Caco-2 (cell line): ENCODE measurements at regions of chrX and their contacts with region 1.

Region 1: DNA sequence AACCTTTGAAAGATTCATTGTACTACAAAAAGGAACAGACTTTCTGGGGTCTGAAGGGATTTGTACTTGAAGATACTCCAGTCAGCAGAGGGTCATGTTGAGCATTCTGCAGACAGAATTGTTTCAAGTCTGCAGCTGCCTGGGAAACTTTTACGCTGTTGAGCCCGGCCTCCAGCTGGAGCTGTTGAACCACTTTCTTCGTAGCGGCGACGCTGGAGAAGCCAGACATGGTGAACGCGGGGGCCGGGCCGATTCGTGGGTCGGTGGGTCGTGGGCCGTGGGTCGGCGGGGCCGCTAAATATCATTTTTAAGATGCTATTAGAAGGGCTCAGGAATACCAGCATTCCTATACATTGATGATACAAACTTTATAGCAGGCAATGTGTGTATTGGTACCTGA is 12.0 kb upstream of the RTL9 start:
- DNase-seq: peak; percentile 17 to 32
- H3K4me3 ChIP-seq: no peak overlapping the region
- H3K4me3 Mint-ChIP-seq: peak overlapping the region; percentile 29
- H3K27ac Mint-ChIP-seq: no peak overlapping the region
- H3K4me1 ChIP-seq: no peaks in the 10 kb centered on the region
- H3K4me1 Mint-ChIP-seq: no peaks in the 10 kb centered on the region
- H3K27me3 ChIP-seq: no peaks in the 10 kb centered on the region
- H3K27me3 Mint-ChIP-seq: no peaks in the 10 kb centered on the region
- CTCF ChIP-seq: no peak

Region 2: GRCh38 chrX:110070970-110071369 is 275.7 kb before region 1 on chrX:
- CTCF ChIA-PET with region 1: no interaction called
- POLR2A ChIA-PET with region 1: no interaction called
- intact Hi-C with region 1: no loop called
- DNase-seq: no peak
- H3K4me3 ChIP-seq: no peak overlapping the region
- H3K4me3 Mint-ChIP-seq: no peak overlapping the region
- H3K27ac Mint-ChIP-seq: no peak overlapping the region
- H3K4me1 ChIP-seq: no peaks in the 10 kb centered on the region
- H3K4me1 Mint-ChIP-seq: no peaks in the 10 kb centered on the region
- H3K27me3 ChIP-seq: no peaks in the 10 kb centered on the region
- H3K27me3 Mint-ChIP-seq: no peaks in the 10 kb centered on the region
- CTCF ChIP-seq: no peak

Region 3: DNA sequence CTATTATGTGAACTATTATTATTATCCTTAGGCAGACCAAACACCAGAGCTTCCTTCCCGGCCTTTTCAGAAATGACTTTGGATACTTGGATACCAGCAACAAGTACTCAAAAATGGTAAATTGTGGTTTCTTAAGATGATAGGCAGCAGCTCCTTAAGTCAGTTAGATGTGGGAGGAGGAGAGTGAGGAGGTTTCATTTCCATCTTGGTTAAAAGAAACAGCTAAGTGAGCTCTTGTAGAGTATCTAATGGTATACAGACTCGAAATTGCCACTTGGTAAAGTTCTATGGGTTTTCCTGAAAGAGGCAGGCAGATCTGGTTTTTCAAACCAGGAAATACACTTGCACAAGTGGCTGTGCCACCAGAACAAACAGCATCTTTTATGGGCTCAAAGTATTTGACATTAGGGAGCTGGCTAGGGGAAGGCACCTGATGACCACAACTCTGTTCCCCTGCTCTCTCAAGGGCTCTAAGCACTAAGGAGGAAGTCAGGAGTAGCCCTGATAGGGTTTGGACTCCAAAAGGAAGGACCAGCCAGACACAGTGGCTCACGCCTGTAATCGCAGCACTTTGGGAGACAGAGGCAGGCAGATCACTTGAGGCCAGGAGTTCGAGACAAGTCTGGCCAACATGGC is 212.8 kb before region 1 on chrX:
- CTCF ChIA-PET with region 1: no interaction called
- POLR2A ChIA-PET with region 1: no interaction called
- intact Hi-C with region 1: no loop called
- DNase-seq: no peak
- H3K4me3 ChIP-seq: no peak overlapping the region
- H3K4me3 Mint-ChIP-seq: no peak overlapping the region
- H3K27ac Mint-ChIP-seq: no peak overlapping the region
- H3K4me1 ChIP-seq: no peaks in the 10 kb centered on the region
- H3K4me1 Mint-ChIP-seq: no peaks in the 10 kb centered on the region
- H3K27me3 ChIP-seq: no peaks in the 10 kb centered on the region
- H3K27me3 Mint-ChIP-seq: no peaks in the 10 kb centered on the region
- CTCF ChIP-seq: no peak

Region 4: DNA sequence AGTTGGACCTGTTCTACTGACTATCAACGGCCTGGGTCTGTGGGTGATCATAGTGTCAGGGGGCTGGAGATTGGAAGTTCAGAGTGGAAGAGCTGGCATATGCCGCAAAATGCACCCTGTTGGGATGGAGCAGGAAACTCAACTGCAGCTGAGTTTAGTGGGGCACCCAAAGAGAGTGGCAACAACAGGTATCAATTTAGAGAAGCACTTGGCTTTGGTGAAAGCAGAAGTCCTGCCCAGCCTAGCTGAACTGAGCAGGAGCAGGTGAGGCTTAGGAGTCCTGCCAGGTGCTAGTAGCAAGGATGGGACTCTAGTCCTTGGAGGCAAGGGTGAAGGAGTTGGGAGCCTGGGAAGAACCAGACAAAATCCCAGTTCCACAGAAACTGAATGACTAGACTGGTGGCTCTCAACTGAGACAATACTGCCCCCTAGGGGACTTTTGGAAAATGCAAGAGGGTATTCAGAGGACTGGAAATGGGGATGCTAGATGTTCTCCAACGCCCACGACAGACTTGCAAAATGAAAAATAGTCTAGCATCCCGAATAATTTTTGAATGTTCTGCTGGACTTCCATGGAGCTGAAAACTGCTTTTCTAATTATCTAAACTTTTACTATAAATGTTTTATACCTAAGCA is 61.3 kb after region 1 on chrX:
- CTCF ChIA-PET with region 1: interaction called, 3 read pairs
- POLR2A ChIA-PET with region 1: no interaction called
- intact Hi-C with region 1: loop called (anchors 1 kb)
- DNase-seq: peak; percentile 46 to 74
- H3K4me3 ChIP-seq: no peak overlapping the region
- H3K4me3 Mint-ChIP-seq: no peak overlapping the region
- H3K27ac Mint-ChIP-seq: no peak overlapping the region
- H3K4me1 ChIP-seq: peaks cover under 1% of the 10 kb centered on the region; the same call in 1 of the 2 replicates
- H3K4me1 Mint-ChIP-seq: no peaks in the 10 kb centered on the region
- H3K27me3 ChIP-seq: no peaks in the 10 kb centered on the region
- H3K27me3 Mint-ChIP-seq: no peaks in the 10 kb centered on the region
- CTCF ChIP-seq: peak; percentile 58 to 62